Panc1 (cell line): ENCODE measurements at regions of chr9 and their contacts with region 1.

Region 1: DNA sequence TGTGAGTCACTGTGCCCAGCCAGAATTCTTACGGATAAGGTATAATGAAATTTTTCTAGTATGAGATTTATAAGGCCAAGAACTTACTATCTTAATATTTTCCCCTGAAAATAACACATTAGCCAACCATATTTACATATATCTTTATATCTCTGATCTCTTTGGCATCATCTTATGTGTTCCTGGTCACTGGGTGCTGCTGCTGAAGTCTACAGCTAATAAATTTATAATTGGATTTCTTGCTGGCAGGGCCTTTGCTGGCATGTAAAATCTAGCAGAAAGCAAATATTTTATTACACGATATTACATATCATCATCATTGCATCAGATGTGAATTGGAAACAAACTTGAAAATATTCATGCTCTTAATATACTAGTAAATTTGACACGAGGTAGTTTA is 590.7 kb downstream of the ANXA1 start:
- DNase-seq: no peak
- ATAC-seq: no peak
- H3K4me3 ChIP-seq: no peak overlapping the region
- H3K27ac ChIP-seq: no peak overlapping the region
- H3K4me1 ChIP-seq: no peaks in the 10 kb centered on the region
- H3K27me3 ChIP-seq: no peaks in the 10 kb centered on the region
- CTCF ChIP-seq: no peak

Region 2: GRCh38 chr9:73753171-73753570 is 10.8 kb after region 1 on chr9:
- CTCF ChIA-PET with region 1: no interaction called
- POLR2A ChIA-PET with region 1: interaction called, 10 read pairs
- in situ Hi-C with region 1: no loop called
- intact Hi-C with region 1: no loop called
- DNase-seq: no peak
- ATAC-seq: no peak
- H3K4me3 ChIP-seq: no peak overlapping the region
- H3K27ac ChIP-seq: no peak overlapping the region
- H3K4me1 ChIP-seq: no peaks in the 10 kb centered on the region
- H3K27me3 ChIP-seq: no peaks in the 10 kb centered on the region
- CTCF ChIP-seq: no peak